ENCODE measurements at regions of chr2 and their contacts with region 1.

Region 1: GRCh38 chr2:41853427-41854216 is 194.2 kb upstream of the PKDCC start:
- DNase-seq: no peak
- H3K4me3 ChIP-seq: no peak overlapping the region
- H3K27ac ChIP-seq: no peak overlapping the region
- H3K4me1 ChIP-seq: no peaks in the 10 kb centered on the region
- H3K27me3 ChIP-seq: no peaks in the 10 kb centered on the region
- CTCF ChIP-seq: peak; percentile 54 to 77 (median 66)

Region 2: GRCh38 chr2:42328148-42328833 is 474.7 kb after region 1 on chr2:
- intact Hi-C with region 1: loop called (anchors 10 kb)
- DNase-seq: no peak
- H3K4me3 ChIP-seq: no peak overlapping the region
- H3K27ac ChIP-seq: no peak overlapping the region
- H3K4me1 ChIP-seq: peaks cover 0 to 5% of the 10 kb centered on the region in 2 donors
- H3K27me3 ChIP-seq: no peaks in the 10 kb centered on the region
- CTCF ChIP-seq: peak; percentile 22 to 50 (median 47)

Measured in ascending aorta (tissue), 2 donors.